A549 (cell line): ENCODE measurements at regions of chr2 and their contacts with region 1.

Region 1: GRCh38 chr2:71609958-71610357 is 156.6 kb downstream of the DYSF start:
- DNase-seq: peak; percentile 42 to 50
- ATAC-seq: peak; percentile 57 to 80; a peak in 4 of 6 replicates
- H3K4me3 ChIP-seq: no peak overlapping the region
- H3K27ac ChIP-seq: no peak overlapping the region
- H3K4me1 ChIP-seq: no peaks in the 10 kb centered on the region
- CTCF ChIP-seq: peak; percentile 75
- EP300 ChIP-seq: no peak
- POLR2A ChIP-seq: no peak
- RAD21 ChIP-seq: peak; percentile 69 to 76

Region 2: DNA sequence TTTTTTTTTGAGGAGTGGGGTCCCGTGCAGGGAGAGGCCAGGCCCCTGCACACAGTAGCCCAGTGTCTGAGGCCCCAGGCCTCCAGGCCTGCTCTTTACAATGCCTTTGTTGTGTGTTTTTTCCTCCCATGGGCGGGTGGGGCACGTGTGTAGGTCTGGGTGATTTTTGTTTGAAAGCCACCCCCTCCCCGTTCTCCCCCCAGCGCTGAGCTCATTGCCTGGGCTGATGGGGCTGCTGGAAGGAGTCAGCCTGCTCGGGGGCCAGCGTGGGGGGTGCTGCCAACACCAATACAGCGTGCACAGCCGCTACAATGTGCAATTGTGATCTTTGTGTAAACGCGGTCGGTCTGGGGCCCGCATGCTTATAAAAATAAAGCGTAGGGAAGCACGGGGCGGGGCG is 13.9 kb before region 1 on chr2:
- CTCF ChIA-PET with region 1: interaction called, 21 read pairs
- POLR2A ChIA-PET with region 1: no interaction called
- DNase-seq: no peak
- ATAC-seq: no peak
- H3K4me3 ChIP-seq: no peak overlapping the region
- H3K27ac ChIP-seq: no peak overlapping the region
- H3K4me1 ChIP-seq: no peaks in the 10 kb centered on the region
- CTCF ChIP-seq: no peak
- EP300 ChIP-seq: no peak
- POLR2A ChIP-seq: no peak
- RAD21 ChIP-seq: no peak

Region 3: DNA sequence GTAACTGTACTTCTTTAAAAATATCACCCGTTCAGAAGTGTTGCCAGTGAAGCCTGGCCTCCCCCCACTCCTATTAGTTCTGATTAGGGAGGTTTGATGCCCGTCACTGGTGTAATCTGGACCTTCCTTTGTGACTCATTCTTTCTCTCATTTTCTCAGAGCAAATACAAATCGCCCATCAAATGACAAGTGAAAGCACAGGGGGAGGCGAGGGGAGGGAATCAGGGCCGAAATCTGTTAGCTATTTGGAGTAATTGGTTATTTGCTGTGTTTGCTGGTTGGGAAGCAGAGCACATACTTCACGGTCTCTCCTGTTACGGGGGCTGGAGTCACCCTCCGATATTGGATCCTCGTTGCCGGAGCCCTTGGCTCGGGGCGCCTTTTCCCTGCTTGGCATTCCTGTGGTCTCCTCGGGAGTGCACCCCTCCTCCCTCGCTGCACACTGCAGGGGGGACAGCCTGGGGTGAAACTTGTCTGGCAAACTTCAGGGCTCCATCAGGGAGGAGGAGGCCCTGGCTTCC is 21.5 kb after region 1 on chr2:
- CTCF ChIA-PET with region 1: interaction called, 12 read pairs
- POLR2A ChIA-PET with region 1: no interaction called
- DNase-seq: no peak
- ATAC-seq: no peak
- H3K4me3 ChIP-seq: no peak overlapping the region
- H3K27ac ChIP-seq: no peak overlapping the region
- H3K4me1 ChIP-seq: no peaks in the 10 kb centered on the region
- CTCF ChIP-seq: no peak
- EP300 ChIP-seq: no peak
- POLR2A ChIP-seq: no peak
- RAD21 ChIP-seq: no peak

Region 4: DNA sequence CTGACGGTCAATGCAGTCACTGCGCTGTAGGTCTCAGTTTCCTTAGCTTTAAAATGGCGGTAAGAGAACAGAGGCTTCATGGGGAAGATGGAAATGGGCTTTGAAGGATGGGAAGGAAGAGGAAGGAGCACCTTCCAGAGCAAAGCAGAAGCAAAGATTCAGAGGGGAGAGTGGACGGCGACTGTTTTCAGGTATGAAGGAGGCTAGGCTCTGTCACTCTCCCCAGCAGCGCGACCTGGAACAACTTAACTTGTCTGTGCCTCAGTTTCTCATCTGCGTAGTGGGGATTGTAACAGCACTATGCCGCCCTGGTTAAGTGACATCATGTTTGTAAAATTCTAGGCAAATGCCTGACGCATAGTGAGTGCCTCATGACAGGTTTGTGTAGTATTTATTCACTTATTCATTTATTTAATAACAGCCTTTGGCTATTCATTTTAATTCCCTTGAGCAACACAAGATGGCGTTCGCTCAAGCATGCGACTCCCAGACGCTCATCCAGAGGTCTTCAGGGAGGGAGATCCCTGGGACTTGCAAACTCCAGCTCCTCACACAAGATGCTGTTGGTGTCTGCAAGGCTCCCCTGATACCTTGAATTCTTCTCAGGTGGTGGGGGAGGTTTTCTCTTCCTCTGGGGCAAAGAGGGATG is 179.7 kb after region 1 on chr2:
- CTCF ChIA-PET with region 1: interaction called, 38 read pairs
- POLR2A ChIA-PET with region 1: no interaction called
- DNase-seq: peak in 1 of 2 experiments; percentile 52
- ATAC-seq: 0 out of 6 replicates have a peak, but pooled peaks of 1 of the 2 experiments have one; percentile 10
- H3K4me3 ChIP-seq: no peak overlapping the region
- H3K27ac ChIP-seq: no peak overlapping the region
- H3K4me1 ChIP-seq: peaks cover 20% of the 10 kb centered on the region
- CTCF ChIP-seq: peak; percentile 28; the same call in 2 of the 3 replicates
- EP300 ChIP-seq: no peak
- POLR2A ChIP-seq: no peak
- RAD21 ChIP-seq: peak; percentile 10 to 40; a peak in 2 of 5 replicates

Region 5: DNA sequence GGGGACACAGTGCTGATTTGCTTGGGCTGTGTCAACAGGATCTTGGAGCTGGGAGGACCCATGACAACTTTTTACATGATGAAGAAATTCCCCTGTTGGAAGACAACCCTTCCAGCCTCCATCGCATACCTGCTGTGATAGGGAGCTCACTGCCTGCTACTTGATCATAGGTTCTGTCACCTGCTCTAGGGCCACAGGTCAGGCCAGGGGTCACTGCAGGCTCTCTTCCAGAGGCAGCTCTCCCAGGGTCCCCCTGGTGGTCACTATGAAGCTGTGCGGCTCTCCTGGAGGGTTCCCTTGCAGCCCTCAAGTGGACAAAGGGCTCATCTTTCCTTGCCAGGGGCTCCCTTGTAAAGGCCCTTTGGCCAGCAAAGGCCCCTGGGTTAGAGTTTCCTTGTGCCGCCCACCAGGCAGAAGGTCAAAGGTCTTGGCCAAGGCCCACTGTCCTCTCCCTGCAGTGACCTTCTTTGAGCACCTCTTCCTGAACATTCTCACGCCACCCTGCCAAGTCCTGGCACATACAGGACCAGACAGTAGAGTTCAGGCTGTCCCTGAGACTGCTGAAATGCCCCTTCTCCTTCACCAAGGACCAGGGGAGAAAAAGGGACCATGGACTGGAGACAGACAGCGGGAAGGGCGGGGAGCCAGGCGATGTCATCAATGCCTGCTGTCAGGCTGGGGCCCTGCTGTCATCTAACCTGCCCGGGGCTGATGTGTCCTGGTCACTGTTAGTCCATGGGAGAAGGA is 188.5 kb after region 1 on chr2:
- CTCF ChIA-PET with region 1: interaction called, 38 read pairs
- POLR2A ChIA-PET with region 1: no interaction called
- DNase-seq: peak; percentile 71 to 74
- ATAC-seq: peak; percentile 73 to 90
- H3K4me3 ChIP-seq: no peak overlapping the region
- H3K27ac ChIP-seq: no peak overlapping the region
- H3K4me1 ChIP-seq: peaks cover 9% of the 10 kb centered on the region
- CTCF ChIP-seq: peak; percentile 79
- EP300 ChIP-seq: no peak
- POLR2A ChIP-seq: no peak
- RAD21 ChIP-seq: peak; percentile 70 to 75